Vagina (tissue), 2 donors: ENCODE measurements at regions of chr16 and their contacts with region 1.

Region 1: GRCh38 chr16:87316923-87317749 is at the start of gene C16orf95:
- DNase-seq: peak in 1 of 2 donors; percentile 97
- H3K4me3 ChIP-seq: peak within 1 kb of the TSS; percentile 65 to 89
- H3K27ac ChIP-seq: peak within 1 kb of the TSS; percentile 89
- H3K4me1 ChIP-seq: peaks cover 14% of the 10 kb centered on the region
- H3K27me3 ChIP-seq: no peaks in the 10 kb centered on the region
- CTCF ChIP-seq: peak; percentile 15 to 37 (median 26)
- POLR2A ChIP-seq: peak in 1 of 2 donors; percentile 92
- total RNA-seq, gene C16orf95: 1.5 TPM

Region 2: DNA sequence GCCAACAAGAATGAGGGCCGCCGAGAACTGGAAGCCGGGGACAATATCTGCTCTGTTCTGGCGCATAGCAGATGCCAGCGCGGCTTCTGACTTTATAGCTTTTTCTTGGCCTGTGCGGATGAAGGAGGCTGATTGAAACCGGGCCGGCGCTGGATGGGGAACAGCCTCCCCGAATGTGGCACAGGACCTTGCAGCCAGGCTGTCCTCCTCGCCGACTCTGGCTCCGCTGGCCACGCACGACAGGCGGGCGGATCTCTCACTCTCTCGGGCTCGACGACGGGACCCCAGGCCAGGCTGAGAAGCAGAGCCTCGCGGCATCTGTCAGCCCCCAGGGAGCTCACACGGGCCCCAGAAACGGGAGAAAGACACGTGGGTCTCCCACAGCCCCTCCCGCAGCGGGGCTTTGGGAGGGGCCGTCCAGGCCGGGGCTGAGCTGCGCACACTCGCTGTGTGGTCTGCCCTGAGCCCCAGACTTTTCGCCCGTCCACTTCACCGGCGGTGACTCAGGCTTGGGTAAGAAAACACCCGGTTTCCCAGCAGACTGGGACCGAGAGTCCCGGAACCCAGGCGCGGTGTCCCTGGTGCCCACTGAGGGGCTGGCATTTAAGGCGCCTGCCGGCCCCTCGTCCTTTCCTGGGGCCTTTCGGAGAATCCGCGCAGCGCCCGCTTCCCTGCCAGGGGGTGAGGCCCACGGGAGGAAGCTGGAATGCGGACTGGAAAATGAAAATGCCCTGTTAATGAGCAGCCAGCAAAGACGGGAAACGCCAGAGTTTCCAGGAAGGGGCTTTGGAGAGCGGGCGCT is 100.5 kb before region 1 on chr16:
- intact Hi-C with region 1: no loop called
- DNase-seq: no peak
- H3K4me3 ChIP-seq: peak overlapping the region; percentile 28 to 29
- H3K27ac ChIP-seq: no peak overlapping the region
- H3K4me1 ChIP-seq: no peaks in the 10 kb centered on the region
- H3K27me3 ChIP-seq: no peaks in the 10 kb centered on the region
- CTCF ChIP-seq: no peak
- POLR2A ChIP-seq: no peak

Region 3: DNA sequence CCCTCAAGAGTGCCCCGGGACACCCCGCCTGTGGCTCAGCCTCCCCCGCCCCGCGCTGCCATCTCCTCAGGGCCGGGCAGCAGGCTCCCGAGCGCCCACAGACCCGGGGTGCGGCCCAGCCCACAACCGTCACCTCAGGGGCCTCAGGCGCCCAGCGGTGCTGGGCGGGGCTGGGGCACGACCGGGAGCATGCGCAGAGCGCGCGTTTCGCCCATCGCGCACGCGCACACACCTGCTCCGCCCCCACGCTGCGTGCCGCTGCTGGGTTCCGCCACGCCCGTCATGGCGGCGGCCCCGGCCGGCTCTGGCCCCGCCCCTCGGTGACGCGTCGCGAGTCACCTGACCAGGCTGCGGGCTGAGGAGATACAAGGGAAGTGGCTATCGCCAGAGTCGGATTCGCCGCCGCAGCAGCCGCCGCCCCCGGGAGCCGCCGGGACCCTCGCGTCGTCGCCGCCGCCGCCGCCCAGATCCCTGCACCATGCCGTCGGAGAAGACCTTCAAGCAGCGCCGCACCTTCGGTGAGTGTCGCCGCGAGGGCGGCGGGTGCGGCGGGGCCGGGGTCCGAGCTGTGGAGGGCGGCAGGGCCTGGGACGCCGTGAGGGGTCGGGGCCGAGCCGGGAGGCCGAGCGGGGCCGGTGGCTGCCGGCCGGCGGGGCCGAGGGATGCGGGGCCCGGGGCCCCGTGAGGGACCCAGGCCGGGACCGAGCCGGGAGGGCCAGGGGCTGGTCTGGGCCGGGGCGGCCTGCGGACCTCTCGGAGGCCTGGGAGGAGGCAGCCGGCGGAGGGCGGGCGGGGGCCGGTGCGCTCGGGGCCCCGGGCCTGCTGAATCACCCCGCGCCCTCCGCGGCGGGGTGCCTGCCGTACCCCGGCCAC is 75.0 kb after region 1 on chr16 and contains the start of gene MAP1LC3B:
- intact Hi-C with region 1: loop called (anchors 1 kb)
- DNase-seq: peak in 1 of 2 donors; percentile 98
- H3K4me3 ChIP-seq: peak within 1 kb of the TSS; percentile 63 to 98
- H3K27ac ChIP-seq: peak within 1 kb of the TSS; percentile 100
- H3K4me1 ChIP-seq: peaks cover 59% of the 10 kb centered on the region
- H3K27me3 ChIP-seq: no peaks in the 10 kb centered on the region
- CTCF ChIP-seq: no peak
- POLR2A ChIP-seq: peak; percentile 58 to 93
- total RNA-seq, gene MAP1LC3B: 44.9 TPM